SK-N-SH (cell line): ENCODE measurements at regions of chr4 and their contacts with region 1.

Region 1: DNA sequence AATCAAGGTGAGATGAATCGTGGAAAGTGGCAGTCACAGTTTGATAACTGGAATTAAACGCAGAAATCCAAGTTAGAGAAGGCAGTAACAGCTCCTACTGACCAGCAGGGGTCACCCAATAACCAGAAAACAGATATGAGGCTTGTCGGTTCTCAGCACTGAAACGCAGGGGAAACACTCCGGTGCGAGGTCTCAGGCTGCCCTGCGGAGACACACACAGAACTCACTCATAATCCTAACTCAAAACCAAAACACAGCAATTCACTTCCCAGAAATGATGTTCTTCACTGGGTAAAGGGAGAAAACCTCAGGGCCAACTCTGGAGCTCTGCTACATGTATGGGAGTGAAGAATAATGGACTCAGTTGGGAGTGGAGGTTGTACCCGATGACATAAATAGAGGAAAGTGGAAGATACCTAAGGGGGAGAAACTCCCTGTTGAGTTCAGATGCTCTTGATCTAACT is 384.4 kb downstream of the RAPGEF2 start:
- DNase-seq: peak; percentile 56
- H3K4me3 ChIP-seq: peak overlapping the region in 1 of 2 experiments; percentile 21; a peak in 1 of 4 replicates
- H3K27ac ChIP-seq: no peak overlapping the region
- H3K4me1 ChIP-seq: peaks cover 0 to 3% of the 10 kb centered on the region in 2 experiments; a peak in 2 of 4 replicates
- H3K27me3 ChIP-seq: no peaks in the 10 kb centered on the region
- CTCF ChIP-seq: peak; percentile 86
- EP300 ChIP-seq: no peak
- RAD21 ChIP-seq: peak; percentile 95

Region 2: GRCh38 chr4:159341522-159341921 is 145.8 kb before region 1 on chr4:
- CTCF ChIA-PET with region 1: no interaction called
- POLR2A ChIA-PET with region 1: no interaction called
- DNase-seq: no peak
- H3K4me3 ChIP-seq: no peak overlapping the region
- H3K27ac ChIP-seq: no peak overlapping the region
- H3K4me1 ChIP-seq: peaks cover 0 to 7% of the 10 kb centered on the region in 2 experiments; a peak in 2 of 4 replicates
- H3K27me3 ChIP-seq: no peaks in the 10 kb centered on the region
- CTCF ChIP-seq: no peak
- EP300 ChIP-seq: no peak
- RAD21 ChIP-seq: no peak

Region 3: GRCh38 chr4:159498446-159499115 is 11.3 kb after region 1 on chr4:
- CTCF ChIA-PET with region 1: interaction called, 15 read pairs
- POLR2A ChIA-PET with region 1: no interaction called
- DNase-seq: no peak
- H3K4me3 ChIP-seq: no peak overlapping the region
- H3K27ac ChIP-seq: peak overlapping the region in 1 of 2 experiments; percentile 22; a peak in 2 of 4 replicates
- H3K4me1 ChIP-seq: peaks cover 0 to 22% of the 10 kb centered on the region in 2 experiments; a peak in 2 of 4 replicates
- H3K27me3 ChIP-seq: peaks cover 5% of the 10 kb centered on the region; the same call in 1 of the 2 replicates
- CTCF ChIP-seq: no peak
- EP300 ChIP-seq: no peak
- RAD21 ChIP-seq: no peak

Region 4: GRCh38 chr4:159504684-159505083 is 17.4 kb after region 1 on chr4:
- CTCF ChIA-PET with region 1: interaction called, 15 read pairs
- POLR2A ChIA-PET with region 1: no interaction called
- DNase-seq: no peak
- H3K4me3 ChIP-seq: peak overlapping the region in 1 of 2 experiments; percentile 41; a peak in 2 of 4 replicates
- H3K27ac ChIP-seq: peak overlapping the region; percentile 29 to 57; a peak in 3 of 4 replicates
- H3K4me1 ChIP-seq: peaks cover 18 to 30% of the 10 kb centered on the region in 2 experiments; a peak in 3 of 4 replicates
- H3K27me3 ChIP-seq: peaks cover 5% of the 10 kb centered on the region; the same call in 1 of the 2 replicates
- CTCF ChIP-seq: no peak
- EP300 ChIP-seq: no peak
- RAD21 ChIP-seq: no peak

Region 5: DNA sequence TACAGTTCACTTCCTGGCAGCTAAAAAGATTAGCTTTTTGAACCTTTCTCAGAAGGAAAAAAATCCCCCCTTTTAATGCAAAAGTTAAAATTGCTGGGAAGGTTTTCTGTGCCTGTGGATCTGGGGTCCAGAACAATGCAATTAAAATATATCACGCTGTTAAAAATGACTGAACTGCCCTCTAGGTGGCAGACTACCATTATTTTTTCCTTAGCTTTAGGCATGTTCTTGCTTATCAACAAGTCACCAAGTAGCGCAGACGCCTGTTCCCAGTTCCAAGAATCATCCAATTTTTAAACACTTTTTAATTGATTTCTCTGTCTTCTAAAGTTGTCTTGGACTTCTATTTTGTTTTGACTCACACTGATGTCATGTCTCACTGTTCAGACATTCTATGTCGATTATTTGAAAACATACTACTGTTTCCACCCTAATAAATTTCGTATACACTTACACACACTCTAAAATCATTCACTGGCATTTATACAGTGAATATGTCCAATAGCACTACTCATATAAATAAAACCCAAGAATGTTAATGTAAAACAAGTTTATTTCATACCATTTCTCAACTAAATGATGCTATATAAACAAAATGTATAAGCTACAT is 277.1 kb after region 1 on chr4:
- CTCF ChIA-PET with region 1: interaction called, 19 read pairs
- POLR2A ChIA-PET with region 1: no interaction called
- DNase-seq: peak; percentile 59
- H3K4me3 ChIP-seq: peak overlapping the region in 1 of 2 experiments; percentile 17; a peak in 1 of 4 replicates
- H3K27ac ChIP-seq: peak overlapping the region in 1 of 2 experiments; percentile 39; a peak in 2 of 4 replicates
- H3K4me1 ChIP-seq: peaks cover 0 to 11% of the 10 kb centered on the region in 2 experiments; a peak in 2 of 4 replicates
- H3K27me3 ChIP-seq: no peaks in the 10 kb centered on the region
- CTCF ChIP-seq: peak; percentile 70
- EP300 ChIP-seq: no peak
- RAD21 ChIP-seq: peak; percentile 79